ENCODE measurements at regions of chr3 and their contacts with region 1.

Region 1: GRCh38 chr3:157606011-157606851 is 103.0 kb upstream of the VEPH1 start:
- DNase-seq: peak; percentile 25 to 46 (median 44)
- H3K4me3 ChIP-seq: no peak overlapping the region
- H3K4me3 Mint-ChIP-seq: peak overlapping the region in 4 of 8 donors; percentile 13 to 62 (median 50)
- H3K27ac ChIP-seq: no peak overlapping the region
- H3K27ac Mint-ChIP-seq: no peak overlapping the region
- H3K4me1 ChIP-seq: peaks cover 5% of the 10 kb centered on the region
- H3K4me1 Mint-ChIP-seq: peaks cover 0 to 9% (median 4%) of the 10 kb centered on the region in 4 donors
- H3K27me3 ChIP-seq: no peaks in the 10 kb centered on the region
- H3K27me3 Mint-ChIP-seq: peaks cover 5 to 6% of the 10 kb centered on the region in 2 donors

Region 2: GRCh38 chr3:157594413-157594812 is 11.8 kb before region 1 on chr3:
- CTCF ChIA-PET with region 1: interaction called, 13 read pairs
- POLR2A ChIA-PET with region 1: no interaction called
- intact Hi-C with region 1: no loop called
- DNase-seq: no peak
- H3K4me3 ChIP-seq: no peak overlapping the region
- H3K4me3 Mint-ChIP-seq: no peak overlapping the region
- H3K27ac ChIP-seq: no peak overlapping the region
- H3K27ac Mint-ChIP-seq: no peak overlapping the region
- H3K4me1 ChIP-seq: no peaks in the 10 kb centered on the region
- H3K4me1 Mint-ChIP-seq: no peaks in the 10 kb centered on the region
- H3K27me3 ChIP-seq: no peaks in the 10 kb centered on the region
- H3K27me3 Mint-ChIP-seq: peaks cover 5 to 13% of the 10 kb centered on the region in 2 donors

Region 3: DNA sequence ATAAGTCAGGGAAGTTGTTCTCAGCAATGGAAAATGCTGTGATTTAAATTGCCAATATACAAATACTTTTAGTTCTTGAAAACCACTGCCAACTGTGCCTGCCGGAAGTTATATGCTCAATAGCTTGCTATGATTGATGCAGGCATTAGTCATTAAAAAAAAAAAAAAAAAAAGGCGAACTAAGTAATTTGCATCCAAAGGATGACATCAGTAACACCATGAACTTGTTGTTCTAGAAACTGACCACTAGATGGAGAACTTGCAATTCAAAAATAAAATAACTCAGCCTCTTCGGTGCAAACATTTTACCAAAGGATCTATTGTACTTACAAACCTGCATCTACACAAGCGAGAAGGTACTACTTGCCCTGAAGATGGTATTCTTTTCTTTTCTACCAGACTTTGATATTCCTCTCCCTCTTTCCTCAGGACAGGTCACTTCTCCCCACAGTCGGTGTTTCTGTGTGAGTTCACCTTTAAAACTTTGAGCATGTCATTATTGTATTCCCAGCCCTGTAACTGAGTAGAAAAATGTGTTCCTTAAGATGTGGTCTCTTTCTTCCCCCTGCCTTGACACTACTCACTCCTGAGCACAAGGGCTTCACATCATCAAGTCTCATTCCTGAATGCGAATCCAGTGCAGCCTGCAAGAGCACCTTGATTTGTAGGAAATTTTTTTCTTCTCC is 12.0 kb after region 1 on chr3:
- CTCF ChIA-PET with region 1: interaction called, 38 read pairs
- POLR2A ChIA-PET with region 1: no interaction called
- intact Hi-C with region 1: no loop called
- DNase-seq: peak in 4 of 5 donors; percentile 28 to 47 (median 44)
- H3K4me3 ChIP-seq: no peak overlapping the region
- H3K4me3 Mint-ChIP-seq: peak overlapping the region in 1 of 8 donors; percentile 24
- H3K27ac ChIP-seq: no peak overlapping the region
- H3K27ac Mint-ChIP-seq: peak overlapping the region in 1 of 7 donors; percentile 33
- H3K4me1 ChIP-seq: peaks cover 7% of the 10 kb centered on the region
- H3K4me1 Mint-ChIP-seq: peaks cover 3 to 6% (median 4%) of the 10 kb centered on the region in 4 donors
- H3K27me3 ChIP-seq: no peaks in the 10 kb centered on the region
- H3K27me3 Mint-ChIP-seq: peaks cover 9 to 11% of the 10 kb centered on the region in 2 donors

Region 4: DNA sequence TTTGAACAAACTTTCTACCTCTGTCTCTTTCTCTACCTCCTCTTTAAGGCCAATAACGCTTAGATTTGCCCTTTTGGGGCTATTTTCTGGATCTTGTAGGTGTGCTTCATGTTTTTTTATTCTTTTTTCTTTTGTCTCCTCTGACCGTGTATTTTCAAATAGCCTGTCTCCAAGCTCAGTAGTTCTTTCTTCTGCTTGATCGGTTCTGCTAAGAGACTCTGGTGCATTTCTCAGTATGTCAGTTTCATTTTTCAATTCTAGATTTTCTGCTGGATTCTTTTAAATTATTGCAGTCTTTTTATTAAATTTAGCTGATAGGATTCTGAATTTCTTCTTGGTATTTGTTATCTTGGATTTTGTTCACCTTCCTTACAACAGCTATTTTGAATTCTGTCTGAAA is 652.4 kb after region 1 on chr3:
- CTCF ChIA-PET with region 1: no interaction called
- POLR2A ChIA-PET with region 1: no interaction called
- intact Hi-C with region 1: no loop called
- DNase-seq: no peak
- H3K4me3 ChIP-seq: no peak overlapping the region
- H3K4me3 Mint-ChIP-seq: no peak overlapping the region
- H3K27ac ChIP-seq: no peak overlapping the region
- H3K27ac Mint-ChIP-seq: peak overlapping the region in 1 of 7 donors; percentile 10
- H3K4me1 ChIP-seq: no peaks in the 10 kb centered on the region
- H3K4me1 Mint-ChIP-seq: peaks cover 3 to 17% (median 11%) of the 10 kb centered on the region in 4 donors
- H3K27me3 ChIP-seq: no peaks in the 10 kb centered on the region
- H3K27me3 Mint-ChIP-seq: no peaks in the 10 kb centered on the region

Region 5: GRCh38 chr3:158434412-158435038 is 828.3 kb after region 1 on chr3:
- CTCF ChIA-PET with region 1: interaction called, 28 read pairs
- POLR2A ChIA-PET with region 1: no interaction called
- intact Hi-C with region 1: no loop called
- DNase-seq: peak in 4 of 5 donors; percentile 13 to 28 (median 15)
- H3K4me3 ChIP-seq: no peak overlapping the region
- H3K4me3 Mint-ChIP-seq: no peak overlapping the region
- H3K27ac ChIP-seq: no peak overlapping the region
- H3K27ac Mint-ChIP-seq: no peak overlapping the region
- H3K4me1 ChIP-seq: no peaks in the 10 kb centered on the region
- H3K4me1 Mint-ChIP-seq: no peaks in the 10 kb centered on the region
- H3K27me3 ChIP-seq: no peaks in the 10 kb centered on the region
- H3K27me3 Mint-ChIP-seq: no peaks in the 10 kb centered on the region

Region 6: GRCh38 chr3:158532099-158532734 is 926.0 kb after region 1 on chr3:
- CTCF ChIA-PET with region 1: interaction called, 4 read pairs
- POLR2A ChIA-PET with region 1: no interaction called
- intact Hi-C with region 1: loop called (anchors 2 kb)
- DNase-seq: peak in 3 of 5 donors; percentile 4 to 12 (median 6)
- H3K4me3 ChIP-seq: no peak overlapping the region
- H3K4me3 Mint-ChIP-seq: no peak overlapping the region
- H3K27ac ChIP-seq: no peak overlapping the region
- H3K27ac Mint-ChIP-seq: no peak overlapping the region
- H3K4me1 ChIP-seq: no peaks in the 10 kb centered on the region
- H3K4me1 Mint-ChIP-seq: no peaks in the 10 kb centered on the region
- H3K27me3 ChIP-seq: no peaks in the 10 kb centered on the region
- H3K27me3 Mint-ChIP-seq: no peaks in the 10 kb centered on the region

Measured in CD4-positive, alpha-beta memory T cell (primary cell).